WTC11 (cell line): ENCODE measurements at regions of chr14 and their contacts with region 1.

Region 1: DNA sequence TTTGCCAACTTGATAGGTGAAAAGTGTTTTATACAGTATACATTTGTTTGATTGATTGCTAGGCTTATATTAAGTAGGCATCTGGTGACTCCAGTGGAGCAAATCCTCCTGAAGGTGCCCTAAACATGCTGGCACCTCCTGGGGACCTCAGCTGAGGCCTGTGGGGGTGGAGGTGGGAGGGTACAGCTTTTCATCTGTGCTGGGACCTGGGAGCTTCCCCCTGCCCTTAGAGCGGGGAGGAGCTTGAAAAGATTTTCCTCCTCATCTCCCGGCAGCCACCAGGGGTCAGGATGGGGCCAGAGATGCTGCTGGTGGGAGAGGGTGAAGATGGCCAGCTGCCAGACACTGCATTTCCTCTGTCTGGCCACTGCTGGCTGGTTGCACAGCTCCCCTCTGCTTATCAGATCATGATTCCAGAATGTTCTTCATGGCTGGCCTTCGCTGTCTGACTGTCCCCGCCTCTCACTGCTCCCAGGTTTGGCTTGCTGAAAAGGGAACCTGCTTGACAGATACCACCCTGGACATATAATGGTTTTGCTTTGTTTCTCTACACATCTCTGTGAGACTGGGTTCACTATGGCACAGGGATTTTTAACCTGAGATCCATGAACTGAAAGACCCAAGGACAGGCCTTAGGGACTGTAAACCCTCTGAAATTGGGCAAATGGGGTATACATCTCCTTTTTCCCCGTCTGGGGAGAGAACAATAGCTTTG is 10.5 kb upstream of the JPH4 start:
- DNase-seq: peak; percentile 91
- ATAC-seq: peak; percentile 100
- H3K4me3 Mint-ChIP-seq: no peak overlapping the region
- H3K27ac Mint-ChIP-seq: no peak overlapping the region
- H3K4me1 Mint-ChIP-seq: peaks cover 20% of the 10 kb centered on the region
- H3K27me3 Mint-ChIP-seq: peaks cover 16% of the 10 kb centered on the region
- CTCF ChIP-seq: peak; percentile 68

Region 2: DNA sequence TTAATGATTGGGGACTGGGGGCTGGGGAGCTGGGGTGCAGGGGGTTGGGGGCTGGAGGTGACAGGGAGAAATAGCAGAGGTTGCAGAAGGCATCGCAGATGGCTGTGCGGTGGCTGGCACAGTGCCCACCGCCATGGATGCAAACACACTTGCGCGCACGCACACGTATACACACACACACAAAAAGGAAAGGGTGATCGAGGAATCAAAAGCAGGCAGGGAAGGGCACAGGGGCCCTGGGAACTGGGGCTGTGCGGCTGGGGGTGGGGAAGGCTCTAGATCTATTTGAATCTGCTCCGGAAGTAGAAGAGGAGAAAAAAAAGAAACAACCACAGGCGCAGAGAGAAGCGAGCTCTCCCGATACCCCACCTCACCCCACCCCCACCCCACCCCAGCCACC is 76.9 kb before region 1 on chr14:
- CTCF ChIA-PET with region 1: no interaction called
- POLR2A ChIA-PET with region 1: no interaction called
- DNase-seq: no peak
- ATAC-seq: no peak
- H3K4me3 Mint-ChIP-seq: no peak overlapping the region
- H3K27ac Mint-ChIP-seq: no peak overlapping the region
- H3K4me1 Mint-ChIP-seq: peaks cover 8% of the 10 kb centered on the region
- H3K27me3 Mint-ChIP-seq: peaks cover 40% of the 10 kb centered on the region
- CTCF ChIP-seq: no peak

Region 3: GRCh38 chr14:23578560-23579310 is 10.3 kb before region 1 on chr14 and contains the start of gene JPH4:
- CTCF ChIA-PET with region 1: interaction called, 38 read pairs
- POLR2A ChIA-PET with region 1: no interaction called
- DNase-seq: peak; percentile 69
- ATAC-seq: peak; percentile 30
- H3K4me3 Mint-ChIP-seq: peak within 1 kb of the TSS; percentile 73
- H3K27ac Mint-ChIP-seq: peak within 1 kb of the TSS; percentile 60; the same call in 1 of the 2 replicates
- H3K4me1 Mint-ChIP-seq: peaks cover 23% of the 10 kb centered on the region
- H3K27me3 Mint-ChIP-seq: peaks cover 36% of the 10 kb centered on the region
- CTCF ChIP-seq: no peak
- total RNA-seq, gene JPH4: 50.1 to 62.0 TPM (median 60.0 TPM) in 3 replicates

Region 4: DNA sequence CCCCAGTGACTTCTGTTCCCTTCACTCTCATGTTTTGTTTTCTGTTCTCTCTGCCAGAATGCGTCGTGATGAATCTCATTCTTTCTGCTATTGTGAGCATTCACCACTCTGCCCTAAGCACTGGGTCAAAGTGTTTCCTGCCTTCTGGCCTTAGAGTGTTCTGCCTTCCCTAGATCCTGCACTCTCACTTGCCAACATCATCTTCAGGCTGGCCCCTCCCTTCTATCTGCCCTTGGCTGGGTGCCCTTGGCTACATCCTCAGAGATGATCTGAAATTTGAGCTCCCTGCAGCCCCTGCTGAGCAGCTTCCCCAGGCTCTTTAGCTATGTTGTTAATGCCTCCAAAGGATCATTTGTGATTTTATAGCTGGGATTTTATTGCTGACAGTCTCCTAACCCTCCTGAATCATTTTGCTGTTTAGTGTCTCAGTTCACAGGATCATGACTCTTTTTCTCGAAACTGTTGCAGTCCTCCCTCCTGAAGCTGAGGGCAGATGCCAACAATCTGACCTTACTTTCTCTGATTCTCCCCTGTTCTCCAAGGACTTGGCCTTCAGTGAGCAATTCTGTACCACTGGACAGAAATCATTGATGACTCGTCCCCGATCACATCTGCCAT is 51.6 kb after region 1 on chr14:
- CTCF ChIA-PET with region 1: interaction called, 25 read pairs
- POLR2A ChIA-PET with region 1: no interaction called
- DNase-seq: peak; percentile 29
- ATAC-seq: peak; percentile 87
- H3K4me3 Mint-ChIP-seq: no peak overlapping the region
- H3K27ac Mint-ChIP-seq: no peak overlapping the region
- H3K4me1 Mint-ChIP-seq: 0 out of 2 replicates have a peak, but pooled peaks cover 2% of the 10 kb centered on the region
- H3K27me3 Mint-ChIP-seq: no peaks in the 10 kb centered on the region; the same call in 1 of the 2 replicates
- CTCF ChIP-seq: no peak

Region 5: DNA sequence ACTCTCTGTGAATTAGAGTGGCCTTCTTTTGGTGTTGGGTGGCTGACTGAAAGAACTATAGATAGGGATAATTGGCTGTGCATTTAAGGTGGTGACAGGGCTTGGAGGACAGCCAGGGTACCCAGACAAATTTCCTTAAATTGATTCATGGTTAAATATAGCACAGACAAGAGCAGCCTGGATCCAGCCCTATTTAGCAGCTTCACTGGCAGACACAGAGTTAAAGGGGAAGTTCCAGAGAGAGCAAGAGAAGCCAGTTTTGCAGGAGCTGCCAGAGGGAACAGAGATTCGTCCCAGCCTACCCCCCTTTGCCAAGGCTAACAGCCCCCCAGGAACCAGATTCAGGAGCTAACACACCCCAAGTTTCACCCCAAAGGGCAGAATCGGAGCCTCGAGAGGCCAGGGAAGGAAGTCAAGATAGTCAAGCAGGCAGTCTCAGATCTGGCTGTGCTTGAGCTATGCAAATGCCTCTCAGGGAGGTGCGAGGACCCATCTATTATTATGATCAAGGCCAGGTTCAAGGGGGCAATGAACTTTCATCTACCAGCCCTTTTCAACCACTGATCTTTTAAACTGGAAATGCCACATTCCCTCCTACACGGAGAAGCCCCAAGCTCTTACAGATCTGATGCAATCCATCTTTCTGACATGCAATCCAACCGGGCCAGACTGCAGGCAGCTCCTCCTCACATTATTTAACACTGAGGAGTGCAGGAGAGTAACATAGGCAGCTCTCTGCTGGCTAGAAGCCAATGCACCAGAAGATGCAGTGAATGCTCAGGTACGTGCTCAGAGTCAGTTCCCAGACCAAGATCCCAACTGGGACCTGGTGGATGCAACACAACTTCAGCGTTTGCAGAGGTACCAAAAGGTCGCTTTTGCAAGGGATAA is 105.3 kb after region 1 on chr14:
- CTCF ChIA-PET with region 1: interaction called, 12 read pairs
- POLR2A ChIA-PET with region 1: no interaction called
- DNase-seq: peak; percentile 37
- ATAC-seq: peak; percentile 68
- H3K4me3 Mint-ChIP-seq: no peak overlapping the region
- H3K27ac Mint-ChIP-seq: no peak overlapping the region
- H3K4me1 Mint-ChIP-seq: 0 out of 2 replicates have a peak, but pooled peaks cover 3% of the 10 kb centered on the region
- H3K27me3 Mint-ChIP-seq: peaks cover 6% of the 10 kb centered on the region
- CTCF ChIP-seq: no peak

Region 6: GRCh38 chr14:23709923-23710322 is 120.9 kb after region 1 on chr14:
- CTCF ChIA-PET with region 1: no interaction called
- POLR2A ChIA-PET with region 1: no interaction called
- DNase-seq: no peak
- ATAC-seq: no peak
- H3K4me3 Mint-ChIP-seq: no peak overlapping the region
- H3K27ac Mint-ChIP-seq: no peak overlapping the region
- H3K4me1 Mint-ChIP-seq: no peaks in the 10 kb centered on the region
- H3K27me3 Mint-ChIP-seq: peaks cover 36% of the 10 kb centered on the region
- CTCF ChIP-seq: no peak

Region 7: GRCh38 chr14:23751616-23752015 is 162.6 kb after region 1 on chr14:
- CTCF ChIA-PET with region 1: no interaction called
- POLR2A ChIA-PET with region 1: no interaction called
- DNase-seq: no peak
- ATAC-seq: no peak
- H3K4me3 Mint-ChIP-seq: no peak overlapping the region
- H3K27ac Mint-ChIP-seq: no peak overlapping the region
- H3K4me1 Mint-ChIP-seq: no peaks in the 10 kb centered on the region
- H3K27me3 Mint-ChIP-seq: peaks cover 13% of the 10 kb centered on the region
- CTCF ChIP-seq: no peak

Region 8: GRCh38 chr14:23793532-23793931 is 204.5 kb after region 1 on chr14:
- CTCF ChIA-PET with region 1: no interaction called
- POLR2A ChIA-PET with region 1: no interaction called
- DNase-seq: no peak
- ATAC-seq: no peak
- H3K4me3 Mint-ChIP-seq: no peak overlapping the region
- H3K27ac Mint-ChIP-seq: no peak overlapping the region
- H3K4me1 Mint-ChIP-seq: no peaks in the 10 kb centered on the region
- H3K27me3 Mint-ChIP-seq: peaks cover 9% of the 10 kb centered on the region; the same call in 1 of the 2 replicates
- CTCF ChIP-seq: no peak

Region 9: DNA sequence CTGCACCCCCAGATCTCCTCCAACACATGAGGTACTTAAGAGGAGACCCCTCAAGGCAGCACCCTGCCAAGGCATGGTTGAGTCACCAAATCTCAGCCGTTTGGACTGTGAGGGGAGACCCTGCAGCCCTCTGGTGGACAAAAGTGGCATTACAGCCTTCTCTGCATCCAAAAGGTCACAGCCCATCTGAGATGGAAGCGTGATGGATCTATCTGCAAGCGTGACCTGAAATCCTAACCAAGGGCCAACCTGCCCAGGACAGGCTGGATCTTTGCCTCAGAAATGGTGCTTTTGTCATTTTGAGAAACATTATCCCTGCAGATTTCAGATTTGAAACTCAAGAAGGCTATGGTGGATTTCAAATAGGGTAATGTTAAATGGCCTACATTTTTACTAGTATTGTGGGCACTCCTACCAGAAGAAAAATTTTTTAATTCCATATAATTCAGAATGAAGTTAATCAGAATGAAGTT is 340.8 kb after region 1 on chr14:
- CTCF ChIA-PET with region 1: interaction called, 11 read pairs
- POLR2A ChIA-PET with region 1: no interaction called
- DNase-seq: peak; percentile 91
- ATAC-seq: peak; percentile 96
- H3K4me3 Mint-ChIP-seq: no peak overlapping the region
- H3K27ac Mint-ChIP-seq: no peak overlapping the region
- H3K4me1 Mint-ChIP-seq: no peaks in the 10 kb centered on the region; the same call in 1 of the 2 replicates
- H3K27me3 Mint-ChIP-seq: peaks cover 6% of the 10 kb centered on the region
- CTCF ChIP-seq: peak; percentile 98